Activated CD8-positive, alpha-beta T cell treated with anti-CD3 and anti-CD28 coated beads, Interleukin-2, amount 10 ng/mL, durations not matched to agents 7 days and 5 days (primary cell): ENCODE measurements at regions of chr10 and their contacts with region 1.

Region 1: GRCh38 chr10:62816331-62817120 is at the start of gene EGR2:
- DNase-seq: peak; percentile 96
- ATAC-seq: peak; percentile 82
- H3K4me3 Mint-ChIP-seq: peak within 1 kb of the TSS; percentile 88
- H3K27ac Mint-ChIP-seq: peak within 1 kb of the TSS; percentile 97
- H3K4me1 Mint-ChIP-seq: peaks cover 56% of the 10 kb centered on the region
- H3K27me3 Mint-ChIP-seq: peaks cover 55% of the 10 kb centered on the region
- total RNA-seq, gene EGR2: 0.50 to 1.3 TPM

Region 2: DNA sequence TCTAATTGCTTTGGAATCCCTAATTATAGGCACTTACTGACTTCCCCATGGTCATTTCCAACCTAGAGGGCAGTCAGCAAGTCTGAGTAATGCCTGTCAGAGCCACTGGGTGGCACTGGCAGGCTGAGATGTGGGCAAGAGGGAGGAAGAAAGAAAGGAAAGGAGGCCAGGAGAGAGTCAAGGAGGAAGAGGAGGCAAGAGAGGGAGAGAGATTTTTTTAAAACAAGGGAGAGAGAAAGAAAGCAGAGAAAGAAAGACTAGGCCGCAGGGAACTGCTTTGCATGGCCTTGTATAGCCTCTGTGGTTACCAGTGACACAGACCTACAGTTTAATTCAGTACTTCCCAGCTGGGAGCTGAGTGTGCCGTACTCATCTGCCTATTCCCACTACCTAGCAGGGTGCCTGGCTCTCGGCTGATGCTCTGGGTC is 222.4 kb before region 1 on chr10:
- CTCF ChIA-PET with region 1: interaction called, 33 read pairs
- POLR2A ChIA-PET with region 1: no interaction called
- DNase-seq: peak; percentile 60
- ATAC-seq: peak; percentile 77
- H3K4me3 Mint-ChIP-seq: no peak overlapping the region
- H3K27ac Mint-ChIP-seq: no peak overlapping the region
- H3K4me1 Mint-ChIP-seq: peaks cover 3% of the 10 kb centered on the region
- H3K27me3 Mint-ChIP-seq: peaks cover 6% of the 10 kb centered on the region

Region 3: GRCh38 chr10:62618576-62619412 is 197.7 kb before region 1 on chr10:
- CTCF ChIA-PET with region 1: interaction called, 98 read pairs
- POLR2A ChIA-PET with region 1: interaction called, 4 read pairs
- DNase-seq: no peak
- ATAC-seq: no peak
- H3K4me3 Mint-ChIP-seq: no peak overlapping the region
- H3K27ac Mint-ChIP-seq: no peak overlapping the region
- H3K4me1 Mint-ChIP-seq: peaks cover 33% of the 10 kb centered on the region
- H3K27me3 Mint-ChIP-seq: peaks cover 2% of the 10 kb centered on the region

Region 4: DNA sequence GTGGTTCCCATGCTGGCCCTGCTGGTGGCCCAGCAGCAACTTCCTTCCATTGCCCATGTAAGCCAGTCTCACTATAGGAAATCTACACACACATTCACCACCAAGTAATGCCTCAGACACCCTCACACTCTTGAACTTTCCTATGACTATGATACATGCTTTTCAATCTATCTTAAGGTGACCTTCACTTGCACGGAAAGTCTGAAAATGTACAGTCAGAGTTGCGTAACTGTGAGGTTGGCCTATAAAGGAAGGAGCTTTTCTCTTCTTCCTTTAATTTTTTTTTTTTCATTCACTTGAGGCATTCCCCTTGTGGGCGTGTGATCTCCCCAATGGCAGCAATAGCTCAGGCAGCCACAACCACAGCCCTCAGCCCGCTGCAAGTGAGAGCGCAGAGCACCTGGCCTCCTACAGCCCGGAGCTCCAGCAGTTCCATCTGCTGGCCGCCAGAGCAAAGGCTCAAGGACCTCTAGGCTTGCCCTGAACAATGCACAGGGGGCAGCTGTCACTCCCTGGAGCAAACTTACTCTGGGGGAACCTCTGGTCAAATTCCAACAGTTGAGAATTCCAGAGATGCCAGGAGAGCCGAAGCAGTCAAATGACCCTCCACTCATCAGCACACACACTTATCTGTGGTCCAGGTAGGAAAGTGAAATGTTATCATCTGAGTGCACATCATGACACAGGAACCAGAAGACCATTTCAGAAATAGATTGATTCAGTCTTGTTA is 135.2 kb before region 1 on chr10:
- CTCF ChIA-PET with region 1: interaction called, 12 read pairs
- POLR2A ChIA-PET with region 1: interaction called, 7 read pairs
- DNase-seq: peak; percentile 79
- ATAC-seq: peak; percentile 92
- H3K4me3 Mint-ChIP-seq: no peak overlapping the region
- H3K27ac Mint-ChIP-seq: peak overlapping the region; percentile 1
- H3K4me1 Mint-ChIP-seq: peaks cover 26% of the 10 kb centered on the region
- H3K27me3 Mint-ChIP-seq: no peaks in the 10 kb centered on the region

Region 5: DNA sequence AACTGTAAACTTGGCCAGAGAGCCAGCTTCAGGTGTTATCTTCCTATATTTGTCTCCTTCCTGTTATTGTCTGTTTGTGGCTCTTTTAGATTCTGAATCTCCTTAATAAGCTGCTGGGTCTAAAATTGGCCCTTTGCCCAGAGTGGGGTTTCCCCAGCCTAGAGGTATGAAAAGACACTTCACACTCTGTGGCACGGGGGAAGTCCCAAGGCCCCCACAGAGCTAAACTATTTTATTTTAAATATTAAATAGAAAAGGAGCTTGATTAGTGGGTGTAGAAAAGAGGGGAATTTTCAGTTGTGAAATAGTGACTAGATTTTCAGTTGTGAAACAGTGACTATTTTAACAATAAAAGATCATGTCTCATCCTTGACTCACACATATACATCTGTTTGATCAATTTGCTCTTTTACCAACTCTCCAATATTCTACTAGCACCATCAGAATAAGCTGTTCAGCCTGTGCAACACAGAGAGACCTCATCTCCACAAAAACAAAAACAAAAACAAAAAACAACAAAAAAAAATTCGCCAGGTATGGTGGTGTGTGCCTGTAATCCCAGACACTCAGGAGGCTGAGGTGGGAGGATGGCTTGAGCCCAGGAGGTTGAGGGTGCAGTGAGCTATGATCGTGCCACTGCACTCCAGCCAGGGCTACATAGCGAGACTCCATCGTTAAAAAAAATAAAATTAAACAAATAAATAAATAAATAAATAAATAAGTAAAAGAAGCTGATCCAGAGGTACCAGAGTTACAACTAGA is 36.9 kb before region 1 on chr10:
- CTCF ChIA-PET with region 1: interaction called, 13 read pairs
- POLR2A ChIA-PET with region 1: no interaction called
- DNase-seq: peak; percentile 71
- ATAC-seq: peak; percentile 94
- H3K4me3 Mint-ChIP-seq: no peak overlapping the region
- H3K27ac Mint-ChIP-seq: no peak overlapping the region
- H3K4me1 Mint-ChIP-seq: peaks cover 24% of the 10 kb centered on the region
- H3K27me3 Mint-ChIP-seq: peaks cover 16% of the 10 kb centered on the region

Region 6: GRCh38 chr10:62852961-62853702 is 36.6 kb after region 1 on chr10:
- CTCF ChIA-PET with region 1: interaction called, 10 read pairs
- POLR2A ChIA-PET with region 1: no interaction called
- DNase-seq: peak; percentile 62
- ATAC-seq: peak; percentile 67
- H3K4me3 Mint-ChIP-seq: peak overlapping the region; percentile 22
- H3K27ac Mint-ChIP-seq: peak overlapping the region; percentile 68
- H3K4me1 Mint-ChIP-seq: peaks cover 63% of the 10 kb centered on the region
- H3K27me3 Mint-ChIP-seq: peaks cover 5% of the 10 kb centered on the region

Region 7: DNA sequence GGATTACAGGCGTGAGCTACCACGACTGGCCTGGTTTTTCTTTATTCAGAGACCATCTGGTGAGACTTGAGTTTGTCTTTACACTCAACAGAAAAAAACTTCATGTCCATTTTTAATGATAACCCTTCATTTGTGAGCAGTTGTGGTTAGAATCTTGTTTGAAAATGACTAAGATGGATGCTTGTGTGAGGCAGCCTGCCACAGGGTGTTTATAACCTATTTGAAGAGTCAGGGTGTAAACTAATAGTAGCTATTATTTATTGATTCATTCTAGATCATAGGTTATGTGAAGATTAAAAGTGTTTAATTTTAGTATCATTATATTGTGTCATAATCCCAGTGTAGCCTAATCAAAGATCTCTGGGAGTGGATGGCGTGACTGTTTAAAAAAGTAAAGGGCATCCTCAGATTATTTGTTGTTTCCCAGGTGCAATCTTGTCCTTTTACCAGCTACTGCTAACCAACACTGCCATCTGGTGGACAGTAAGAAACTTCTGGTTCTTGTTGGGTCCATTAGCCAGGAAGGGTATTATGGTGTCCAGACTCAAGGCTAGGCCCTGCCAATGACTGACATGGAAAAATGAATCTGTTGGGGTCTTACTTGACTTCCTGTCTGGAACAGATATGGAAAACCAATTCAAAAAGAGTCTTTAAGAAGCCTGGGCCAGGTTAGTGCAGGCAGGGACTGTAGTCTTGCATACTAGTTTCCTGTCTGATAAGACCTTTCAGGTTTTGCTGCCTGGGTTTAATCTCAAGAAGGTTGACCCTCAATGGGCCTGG is 341.5 kb after region 1 on chr10:
- CTCF ChIA-PET with region 1: interaction called, 22 read pairs
- POLR2A ChIA-PET with region 1: no interaction called
- DNase-seq: peak; percentile 67
- ATAC-seq: peak; percentile 78
- H3K4me3 Mint-ChIP-seq: no peak overlapping the region
- H3K27ac Mint-ChIP-seq: no peak overlapping the region
- H3K4me1 Mint-ChIP-seq: peaks cover 10% of the 10 kb centered on the region
- H3K27me3 Mint-ChIP-seq: no peaks in the 10 kb centered on the region